Activated T-helper 2 cell treated with anti-CD3 and anti-CD28 coated beads, Interferon-gamma antibody, Interleukin-2, Interleukin-4, amounts not matched to agents 10 μg/mL and 5 μg/mL and 100 μg/mL, durations not matched to agents 14 hours and 24 hours and 36 hours (primary cell): ENCODE measurements at regions of chr9 and their contacts with region 1.

Region 1: DNA sequence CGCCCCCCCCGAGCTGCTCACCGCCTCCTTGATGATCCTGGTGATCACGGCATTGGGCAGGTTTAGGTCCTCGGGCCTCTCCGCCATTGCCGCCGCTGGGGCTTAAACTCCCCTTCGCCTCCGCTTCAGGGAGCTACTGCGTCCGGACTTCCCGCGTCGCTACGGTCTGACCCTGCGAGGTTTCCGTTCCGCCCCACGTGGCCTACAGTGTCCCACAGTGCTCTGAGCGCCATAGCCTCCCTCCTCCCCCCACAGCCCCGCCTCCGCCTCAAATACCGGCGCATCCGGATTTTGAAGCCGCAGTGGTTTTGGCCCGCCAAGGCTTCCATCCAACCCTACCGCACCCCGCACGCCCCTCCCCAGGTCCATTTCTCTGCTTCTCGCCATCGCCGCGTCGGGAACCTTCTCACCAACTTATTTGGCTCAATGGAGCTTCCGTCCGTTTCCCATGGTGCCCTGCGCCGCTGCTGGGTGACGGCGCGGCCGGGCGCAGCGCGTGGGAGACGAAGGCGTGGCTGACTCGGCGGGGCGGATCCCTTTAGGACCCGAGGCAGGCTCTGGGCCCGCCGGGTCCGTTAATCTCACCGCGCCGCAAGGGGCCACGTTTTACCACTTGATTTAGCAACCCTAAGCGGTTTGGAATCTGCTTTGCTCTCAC is at the starts of genes C9orf43 and POLE3:
- DNase-seq: peak; percentile 94
- H3K4me3 Mint-ChIP-seq: peak within 1 kb of the TSS; percentile 97
- H3K27ac Mint-ChIP-seq: peak within 1 kb of the TSS; percentile 99
- H3K4me1 Mint-ChIP-seq: peaks cover 20% of the 10 kb centered on the region
- H3K27me3 Mint-ChIP-seq: no peaks in the 10 kb centered on the region
- total RNA-seq, gene C9orf43: 0.48 TPM in 2 replicates
- total RNA-seq, gene POLE3: 71.0 and 73.8 TPM in 2 replicates

Region 2: GRCh38 chr9:113221003-113221799 is 189.1 kb before region 1 on chr9 and contains the starts of genes FKBP15 and SLC31A1:
- intact Hi-C with region 1: loop called (anchors 2 kb)
- DNase-seq: peak; percentile 94
- H3K4me3 Mint-ChIP-seq: peak within 1 kb of the TSS; percentile 92
- H3K27ac Mint-ChIP-seq: peak within 1 kb of the TSS; percentile 78
- H3K4me1 Mint-ChIP-seq: peaks cover 41% of the 10 kb centered on the region
- H3K27me3 Mint-ChIP-seq: no peaks in the 10 kb centered on the region
- total RNA-seq, gene FKBP15: 39.6 and 40.4 TPM in 2 replicates
- total RNA-seq, gene SLC31A1: 18.0 and 20.0 TPM in 2 replicates

Region 3: DNA sequence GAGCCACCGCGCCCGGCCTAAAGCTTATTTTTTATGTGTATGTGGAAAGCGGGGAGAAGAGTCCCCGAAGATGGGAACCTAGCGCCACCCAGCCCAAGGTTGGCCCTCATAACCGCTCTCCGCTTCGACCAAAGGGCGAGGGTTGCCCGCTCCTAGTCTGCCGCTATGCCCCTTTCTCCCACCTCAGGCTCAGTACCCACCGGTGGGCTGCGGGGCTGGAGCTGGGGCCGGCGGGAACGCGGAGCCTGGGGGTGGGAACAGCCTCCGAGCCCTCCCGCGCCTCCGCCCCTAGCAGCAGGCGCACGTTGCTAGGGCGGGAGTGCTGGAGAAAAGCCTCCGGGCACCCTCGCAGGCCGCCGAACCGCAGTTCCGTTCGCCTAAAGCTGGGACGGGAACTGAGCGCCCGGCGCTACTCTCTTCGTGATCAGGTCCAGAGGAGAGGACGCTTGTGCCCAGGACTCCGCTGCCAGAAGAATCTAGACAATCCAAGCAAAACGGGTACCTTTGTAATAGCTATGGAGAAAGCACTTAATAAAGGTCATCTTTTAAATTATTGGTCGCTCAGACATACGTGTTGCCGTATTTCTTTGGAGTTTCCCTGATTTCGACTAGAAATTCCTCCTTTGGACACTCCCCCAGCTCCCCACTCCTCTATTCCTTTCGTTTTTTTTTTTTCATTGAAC is 70.2 kb before region 1 on chr9 and contains the start of gene WDR31:
- intact Hi-C with region 1: loop called (anchors 2 kb)
- DNase-seq: peak; percentile 75
- H3K4me3 Mint-ChIP-seq: peak within 1 kb of the TSS; percentile 86
- H3K27ac Mint-ChIP-seq: peak within 1 kb of the TSS; percentile 56
- H3K4me1 Mint-ChIP-seq: peaks cover 37% of the 10 kb centered on the region
- H3K27me3 Mint-ChIP-seq: no peaks in the 10 kb centered on the region
- total RNA-seq, gene WDR31: 1.9 and 2.1 TPM in 2 replicates

Region 4: GRCh38 chr9:113376634-113377567 is 33.4 kb before region 1 on chr9 and contains the start of gene HDHD3:
- intact Hi-C with region 1: loop called (anchors 2 kb)
- DNase-seq: peak; percentile 78
- H3K4me3 Mint-ChIP-seq: peak within 1 kb of the TSS; percentile 85
- H3K27ac Mint-ChIP-seq: peak within 1 kb of the TSS; percentile 65
- H3K4me1 Mint-ChIP-seq: peaks cover 9% of the 10 kb centered on the region
- H3K27me3 Mint-ChIP-seq: no peaks in the 10 kb centered on the region
- total RNA-seq, gene HDHD3: 18.7 and 18.8 TPM in 2 replicates

Region 5: GRCh38 chr9:113578882-113579282 is 168.5 kb after region 1 on chr9:
- intact Hi-C with region 1: loop called (anchors 1 kb)
- DNase-seq: peak; percentile 84
- H3K4me3 Mint-ChIP-seq: peak overlapping the region; percentile 79
- H3K27ac Mint-ChIP-seq: peak overlapping the region; percentile 93
- H3K4me1 Mint-ChIP-seq: peaks cover 72% of the 10 kb centered on the region
- H3K27me3 Mint-ChIP-seq: no peaks in the 10 kb centered on the region